ENCODE measurements at regions of chr22 and their contacts with region 1.

Region 1: DNA sequence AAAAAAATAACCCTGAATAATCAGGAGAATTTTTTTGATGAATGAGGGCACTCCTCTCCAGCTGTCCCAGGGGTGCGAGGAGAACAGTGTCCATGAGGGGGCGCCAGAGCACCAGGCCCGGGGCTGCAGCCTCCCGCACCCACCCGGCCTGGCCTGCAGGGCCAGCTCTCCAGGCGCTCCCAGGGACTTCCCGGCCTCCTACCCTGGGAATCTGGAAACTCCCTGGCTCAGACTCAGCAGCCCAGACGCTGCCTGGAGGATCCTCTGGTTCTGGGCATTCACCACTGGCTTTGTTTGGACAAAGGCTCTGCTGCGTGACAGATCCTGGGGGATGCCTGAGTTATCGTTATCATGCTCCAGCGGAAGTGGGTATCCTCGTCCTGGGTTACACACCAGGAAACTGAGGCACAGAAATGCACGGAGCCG is 31.0 kb downstream of the MCM5 start:
- DNase-seq: peak; percentile 55
- H3K4me3 ChIP-seq: no peak overlapping the region
- H3K27me3 ChIP-seq: no peaks in the 10 kb centered on the region
- CTCF ChIP-seq: peak; percentile 99

Region 2: GRCh38 chr22:35350539-35351503 is 80.1 kb before region 1 on chr22:
- CTCF ChIA-PET with region 1: interaction called, 10 read pairs
- POLR2A ChIA-PET with region 1: no interaction called
- DNase-seq: peak; percentile 49
- H3K4me3 ChIP-seq: peak overlapping the region; percentile 53
- H3K27me3 ChIP-seq: no peaks in the 10 kb centered on the region
- CTCF ChIP-seq: peak; percentile 86

Region 3: GRCh38 chr22:35489239-35489638 is 58.3 kb after region 1 on chr22:
- CTCF ChIA-PET with region 1: no interaction called
- POLR2A ChIA-PET with region 1: no interaction called
- DNase-seq: no peak
- H3K4me3 ChIP-seq: no peak overlapping the region
- H3K27me3 ChIP-seq: peaks cover 13% of the 10 kb centered on the region
- CTCF ChIP-seq: no peak

Region 4: GRCh38 chr22:35568751-35569725 is 138.1 kb after region 1 on chr22:
- CTCF ChIA-PET with region 1: interaction called, 220 read pairs
- POLR2A ChIA-PET with region 1: no interaction called
- DNase-seq: peak; percentile 26
- H3K4me3 ChIP-seq: no peak overlapping the region
- H3K27me3 ChIP-seq: peaks cover 3% of the 10 kb centered on the region
- CTCF ChIP-seq: no peak

Region 5: DNA sequence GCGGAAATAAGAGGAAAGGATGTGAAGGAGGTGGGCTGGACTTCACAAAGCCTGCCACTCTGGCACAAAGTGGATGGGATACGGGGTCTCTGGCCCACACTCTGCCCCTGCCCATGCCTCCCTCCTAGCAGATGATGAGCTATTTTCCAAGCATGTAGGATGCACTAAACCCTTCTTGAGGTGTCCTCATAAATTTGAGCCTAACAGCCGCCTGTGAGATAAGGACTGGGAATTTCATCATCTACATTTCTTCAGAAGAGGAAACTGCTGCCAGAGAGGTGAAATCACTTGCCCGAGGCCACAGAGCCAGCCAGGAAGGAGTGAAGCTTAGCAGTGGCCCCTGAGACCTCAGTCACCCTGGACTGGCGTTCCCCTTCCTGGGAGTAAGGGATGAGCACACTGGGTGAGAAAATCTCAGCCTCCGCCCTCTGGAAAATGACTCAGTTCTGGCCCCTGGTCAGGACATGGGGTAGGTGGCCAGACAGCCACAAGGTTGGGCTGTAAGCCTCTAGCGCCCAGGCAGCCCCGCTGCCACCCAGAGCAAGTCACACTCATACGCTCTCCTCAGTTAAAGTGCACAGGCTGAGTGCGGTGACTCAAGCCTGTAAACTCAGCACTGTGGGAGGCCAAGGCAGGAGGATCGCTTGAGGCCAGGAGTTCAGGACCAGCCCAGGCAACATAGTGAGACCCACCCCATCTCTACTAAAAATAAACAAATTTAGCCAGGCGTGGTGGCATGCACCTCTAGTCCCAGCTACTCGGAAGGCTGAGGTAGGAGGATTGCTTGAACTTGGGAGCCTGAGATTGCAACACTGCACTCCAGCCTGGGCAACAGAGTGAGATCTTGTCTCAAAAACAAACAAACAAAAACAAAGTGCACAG is 158.4 kb after region 1 on chr22:
- CTCF ChIA-PET with region 1: interaction called, 220 read pairs
- POLR2A ChIA-PET with region 1: no interaction called
- DNase-seq: peak; percentile 92
- H3K4me3 ChIP-seq: no peak overlapping the region
- H3K27me3 ChIP-seq: no peaks in the 10 kb centered on the region
- CTCF ChIP-seq: 0 out of 2 replicates have a peak, but pooled peaks have one; percentile 17

Region 6: GRCh38 chr22:35622191-35622913 is 191.4 kb after region 1 on chr22:
- CTCF ChIA-PET with region 1: interaction called, 33 read pairs
- POLR2A ChIA-PET with region 1: no interaction called
- DNase-seq: no peak
- H3K4me3 ChIP-seq: no peak overlapping the region
- H3K27me3 ChIP-seq: no peaks in the 10 kb centered on the region
- CTCF ChIP-seq: no peak

Measured in BJ (cell line).